Dendritic cell treated with granulocyte-macrophage colony-stimulating factor and Interleukin-4, amounts not matched to agents 40 ng/mL and 50 ng/mL, for 4 days (primary cell): ENCODE measurements at regions of chr16 and their contacts with region 1.

Region 1: GRCh38 chr16:89289428-89290395 is 72.2 kb downstream of the ZNF778 start:
- H3K4me3 Mint-ChIP-seq: no peak overlapping the region
- H3K27ac Mint-ChIP-seq: no peak overlapping the region
- H3K4me1 Mint-ChIP-seq: no peaks in the 10 kb centered on the region
- H3K27me3 Mint-ChIP-seq: no peaks in the 10 kb centered on the region

Region 2: GRCh38 chr16:89222931-89223330 is 66.8 kb before region 1 on chr16:
- intact Hi-C with region 1: loop called (anchors 10 kb)
- H3K4me3 Mint-ChIP-seq: no peak overlapping the region
- H3K27ac Mint-ChIP-seq: no peak overlapping the region
- H3K4me1 Mint-ChIP-seq: no peaks in the 10 kb centered on the region
- H3K27me3 Mint-ChIP-seq: no peaks in the 10 kb centered on the region